A549 (cell line): ENCODE measurements at regions of chr19 and their contacts with region 1.

Region 1: GRCh38 chr19:3821857-3822364 is 35.7 kb upstream of the MATK start:
- DNase-seq: peak; percentile 60 to 67
- ATAC-seq: peak; percentile 51 to 84; a peak in 5 of 6 replicates
- H3K4me3 ChIP-seq: no peak overlapping the region
- H3K27ac ChIP-seq: no peak overlapping the region
- H3K4me1 ChIP-seq: 0 out of 3 replicates have a peak, but pooled peaks cover 4% of the 10 kb centered on the region
- CTCF ChIP-seq: peak; percentile 66
- EP300 ChIP-seq: no peak
- POLR2A ChIP-seq: no peak
- RAD21 ChIP-seq: peak; percentile 35 to 38; a peak in 2 of 5 replicates

Region 2: DNA sequence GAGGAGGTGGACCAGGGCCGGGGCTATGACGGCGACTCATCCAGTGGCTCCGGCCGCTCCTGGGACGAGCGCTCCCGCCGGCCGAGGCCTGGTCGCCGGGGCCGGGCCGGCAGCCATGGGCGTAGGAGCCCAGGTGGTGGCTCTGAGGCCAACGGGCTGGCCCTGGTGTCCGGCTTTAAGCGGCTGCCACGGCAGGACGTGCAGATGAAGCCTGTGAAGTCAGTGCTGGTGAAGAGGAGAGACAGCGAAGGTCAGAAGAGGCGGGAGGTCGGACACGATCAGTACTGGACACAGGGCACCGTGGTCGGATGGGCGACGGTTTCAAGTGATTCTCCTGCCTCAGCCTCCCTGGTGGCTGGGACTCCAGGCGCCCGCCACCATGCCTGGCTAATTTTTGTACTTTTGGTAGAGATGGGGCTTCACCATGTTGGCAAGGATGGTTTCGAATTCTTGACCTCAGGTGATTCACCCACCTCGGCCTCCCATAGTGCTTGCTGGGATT is 91.4 kb before region 1 on chr19:
- CTCF ChIA-PET with region 1: no interaction called
- POLR2A ChIA-PET with region 1: no interaction called
- DNase-seq: no peak
- ATAC-seq: no peak
- H3K4me3 ChIP-seq: no peak overlapping the region
- H3K27ac ChIP-seq: no peak overlapping the region
- H3K4me1 ChIP-seq: peaks cover 15% of the 10 kb centered on the region
- CTCF ChIP-seq: no peak
- EP300 ChIP-seq: no peak
- POLR2A ChIP-seq: no peak
- RAD21 ChIP-seq: no peak

Region 3: GRCh38 chr19:3782903-3783302 is 39.0 kb before region 1 on chr19:
- CTCF ChIA-PET with region 1: no interaction called
- POLR2A ChIA-PET with region 1: no interaction called
- DNase-seq: no peak
- ATAC-seq: no peak
- H3K4me3 ChIP-seq: no peak overlapping the region
- H3K27ac ChIP-seq: no peak overlapping the region
- H3K4me1 ChIP-seq: peaks cover 9% of the 10 kb centered on the region; the same call in 1 of the 3 replicates
- CTCF ChIP-seq: no peak
- EP300 ChIP-seq: no peak
- POLR2A ChIP-seq: no peak
- RAD21 ChIP-seq: no peak

Region 4: GRCh38 chr19:3809881-3810707 is 11.8 kb before region 1 on chr19:
- CTCF ChIA-PET with region 1: interaction called, 25 read pairs
- POLR2A ChIA-PET with region 1: no interaction called
- DNase-seq: no peak
- ATAC-seq: no peak
- H3K4me3 ChIP-seq: no peak overlapping the region
- H3K27ac ChIP-seq: no peak overlapping the region
- H3K4me1 ChIP-seq: no peaks in the 10 kb centered on the region
- CTCF ChIP-seq: no peak
- EP300 ChIP-seq: no peak
- POLR2A ChIP-seq: no peak
- RAD21 ChIP-seq: no peak

Region 5: GRCh38 chr19:3836887-3837286 is 15.0 kb after region 1 on chr19:
- CTCF ChIA-PET with region 1: interaction called, 25 read pairs
- POLR2A ChIA-PET with region 1: no interaction called
- DNase-seq: no peak
- ATAC-seq: no peak
- H3K4me3 ChIP-seq: no peak overlapping the region
- H3K27ac ChIP-seq: no peak overlapping the region
- H3K4me1 ChIP-seq: no peaks in the 10 kb centered on the region
- CTCF ChIP-seq: no peak
- EP300 ChIP-seq: no peak
- POLR2A ChIP-seq: no peak
- RAD21 ChIP-seq: no peak

Region 6: DNA sequence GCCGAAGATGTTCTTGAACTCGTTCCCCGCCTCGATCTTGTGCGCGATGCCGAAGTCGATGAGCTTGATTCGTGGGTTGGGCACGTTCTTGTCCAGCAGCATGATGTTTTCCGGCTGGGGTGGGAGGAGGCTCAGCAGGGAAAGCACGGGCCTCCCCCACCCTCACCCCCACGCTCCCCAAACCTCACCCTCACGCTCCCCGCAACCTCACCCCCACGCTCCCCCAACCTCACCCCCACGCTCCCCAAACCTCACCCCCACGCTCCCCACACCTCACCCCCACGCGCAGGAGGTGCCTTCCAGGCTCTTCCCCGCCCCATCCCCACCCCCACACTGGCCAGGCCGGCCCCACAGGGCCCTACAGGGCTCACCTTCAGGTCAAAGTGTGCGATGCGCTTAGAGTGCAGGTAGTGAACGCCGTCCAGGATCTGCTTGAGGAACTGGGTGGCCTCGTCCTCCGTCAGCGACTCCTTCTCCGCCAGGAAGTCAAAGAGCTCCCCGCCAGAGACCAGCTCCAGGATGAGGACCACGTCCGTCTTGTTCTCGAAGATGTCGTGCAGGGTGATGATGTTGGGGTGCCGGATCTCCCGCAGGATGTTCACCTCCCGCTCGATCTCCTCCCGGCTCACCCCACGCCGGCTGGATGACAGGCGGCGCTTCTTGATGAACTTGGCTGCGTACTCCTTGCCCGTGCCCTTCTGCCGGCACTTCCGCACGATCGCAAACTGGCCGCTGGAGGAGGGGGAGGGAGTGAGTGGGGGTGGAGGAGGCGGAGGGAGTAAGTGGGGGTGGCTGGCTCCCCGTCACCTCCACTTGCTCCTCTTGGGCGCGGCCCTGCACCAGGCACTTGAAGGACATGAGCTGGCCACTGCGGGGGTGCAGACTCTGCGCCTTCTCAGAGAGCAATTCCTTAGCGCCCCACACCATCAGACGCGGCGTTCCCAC is 142.6 kb after region 1 on chr19:
- CTCF ChIA-PET with region 1: interaction called, 10 read pairs
- POLR2A ChIA-PET with region 1: interaction called, 3 read pairs
- DNase-seq: no peak
- ATAC-seq: no peak
- H3K4me3 ChIP-seq: no peak overlapping the region
- H3K27ac ChIP-seq: no peak overlapping the region
- H3K4me1 ChIP-seq: peaks cover 21% of the 10 kb centered on the region
- CTCF ChIP-seq: no peak
- EP300 ChIP-seq: no peak
- POLR2A ChIP-seq: no peak
- RAD21 ChIP-seq: no peak

Region 7: GRCh38 chr19:3984908-3985642 is 163.2 kb after region 1 on chr19 and contains the start of gene EEF2:
- CTCF ChIA-PET with region 1: interaction called, 23 read pairs
- POLR2A ChIA-PET with region 1: interaction called, 3 read pairs
- DNase-seq: peak; percentile 60 to 85
- ATAC-seq: peak; percentile 25 to 49; a peak in 4 of 6 replicates
- H3K4me3 ChIP-seq: peak within 1 kb of the TSS; percentile 96
- H3K27ac ChIP-seq: peak within 1 kb of the TSS; percentile 83 to 97
- H3K4me1 ChIP-seq: peaks cover 26% of the 10 kb centered on the region; the same call in 2 of the 3 replicates
- CTCF ChIP-seq: no peak
- EP300 ChIP-seq: no peak
- POLR2A ChIP-seq: peak; percentile 98
- RAD21 ChIP-seq: no peak
- polyA plus RNA-seq, gene EEF2: 526 and 680 TPM in 2 replicates

Region 8: GRCh38 chr19:4208385-4209094 is 386.6 kb after region 1 on chr19:
- CTCF ChIA-PET with region 1: interaction called, 22 read pairs
- POLR2A ChIA-PET with region 1: no interaction called
- DNase-seq: peak; percentile 55 to 62
- ATAC-seq: peak; percentile 65 to 69; a peak in 5 of 6 replicates
- H3K4me3 ChIP-seq: no peak overlapping the region
- H3K27ac ChIP-seq: peak overlapping the region; percentile 63 to 84
- H3K4me1 ChIP-seq: peaks cover 25% of the 10 kb centered on the region
- CTCF ChIP-seq: peak; percentile 58
- EP300 ChIP-seq: no peak
- POLR2A ChIP-seq: no peak
- RAD21 ChIP-seq: peak; percentile 48 to 49; a peak in 4 of 5 replicates